Natural killer cell (primary cell): ENCODE measurements at regions of chr14 and their contacts with region 1.

Region 1: DNA sequence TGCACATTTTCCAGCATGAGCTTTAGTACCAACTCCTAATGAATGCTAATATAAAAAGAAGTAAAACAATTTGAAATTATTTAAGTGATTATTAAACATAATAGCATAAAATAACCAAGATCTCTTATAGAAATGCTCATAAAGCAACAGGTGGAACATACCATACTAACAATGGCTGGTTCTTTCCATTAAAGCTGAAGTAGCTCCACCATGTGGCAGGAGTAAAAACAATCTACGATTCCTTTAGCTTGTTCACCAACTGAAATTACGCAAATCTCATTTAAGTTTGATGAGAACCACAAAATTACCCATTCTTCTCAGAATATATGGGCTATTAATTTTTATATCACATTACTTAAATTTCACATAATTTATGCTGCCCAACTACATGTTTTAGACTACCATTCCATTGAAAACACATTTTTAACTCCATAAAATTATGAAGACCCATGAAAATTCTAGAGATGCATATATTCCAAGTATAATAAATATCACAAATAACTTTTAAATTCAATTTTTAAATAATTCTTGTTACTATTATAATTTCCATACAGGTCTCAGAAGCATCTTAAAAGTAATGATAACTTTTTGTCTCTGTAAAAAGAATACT is 213.6 kb downstream of the DAD1 start:
- DNase-seq: peak in 1 of 2 donors; percentile 22
- ATAC-seq: peak in 2 of 3 donors; percentile 62 to 65
- H3K4me3 ChIP-seq: no peak overlapping the region
- H3K4me3 Mint-ChIP-seq: no peak overlapping the region
- H3K27ac ChIP-seq: no peak overlapping the region
- H3K27ac Mint-ChIP-seq: no peak overlapping the region
- H3K4me1 ChIP-seq: no peaks in the 10 kb centered on the region
- H3K4me1 Mint-ChIP-seq: no peaks in the 10 kb centered on the region
- H3K27me3 ChIP-seq: no peaks in the 10 kb centered on the region
- H3K27me3 Mint-ChIP-seq: peaks cover 9 to 19% of the 10 kb centered on the region in 2 donors
- CTCF ChIP-seq: peak; percentile 73

Region 2: GRCh38 chr14:21734457-21735074 is 640.9 kb before region 1 on chr14:
- intact Hi-C with region 1: no loop called
- DNase-seq: peak in 1 of 2 donors; percentile 87
- ATAC-seq: peak in 2 of 3 donors; percentile 59 to 65
- H3K4me3 ChIP-seq: no peak overlapping the region
- H3K4me3 Mint-ChIP-seq: no peak overlapping the region
- H3K27ac ChIP-seq: no peak overlapping the region
- H3K27ac Mint-ChIP-seq: no peak overlapping the region
- H3K4me1 ChIP-seq: no peaks in the 10 kb centered on the region
- H3K4me1 Mint-ChIP-seq: peaks cover 12 to 14% of the 10 kb centered on the region in 2 donors
- H3K27me3 ChIP-seq: peaks cover under 1% of the 10 kb centered on the region
- H3K27me3 Mint-ChIP-seq: peaks cover 22 to 63% of the 10 kb centered on the region in 2 donors
- CTCF ChIP-seq: peak; percentile 77

Region 3: GRCh38 chr14:22163051-22163450 is 212.4 kb before region 1 on chr14:
- intact Hi-C with region 1: loop called (anchors 10 kb)
- DNase-seq: peak in 1 of 2 donors; percentile 40
- ATAC-seq: no peak
- H3K4me3 ChIP-seq: no peak overlapping the region
- H3K4me3 Mint-ChIP-seq: no peak overlapping the region
- H3K27ac ChIP-seq: no peak overlapping the region
- H3K27ac Mint-ChIP-seq: no peak overlapping the region
- H3K4me1 ChIP-seq: no peaks in the 10 kb centered on the region
- H3K4me1 Mint-ChIP-seq: peaks cover 7 to 14% of the 10 kb centered on the region in 2 donors
- H3K27me3 ChIP-seq: peaks cover 2% of the 10 kb centered on the region
- H3K27me3 Mint-ChIP-seq: peaks cover 7 to 31% of the 10 kb centered on the region in 2 donors
- CTCF ChIP-seq: no peak

Region 4: GRCh38 chr14:22226381-22226780 is 149.0 kb before region 1 on chr14:
- intact Hi-C with region 1: loop called (anchors 1 kb)
- DNase-seq: peak in 1 of 2 donors; percentile 60
- ATAC-seq: peak; percentile 48 to 53 (median 49)
- H3K4me3 ChIP-seq: no peak overlapping the region
- H3K4me3 Mint-ChIP-seq: peak overlapping the region; percentile 33
- H3K27ac ChIP-seq: no peak overlapping the region
- H3K27ac Mint-ChIP-seq: peak overlapping the region in 1 of 2 donors; percentile 44
- H3K4me1 ChIP-seq: peaks cover 9% of the 10 kb centered on the region
- H3K4me1 Mint-ChIP-seq: peaks cover 26 to 36% of the 10 kb centered on the region in 2 donors
- H3K27me3 ChIP-seq: no peaks in the 10 kb centered on the region
- H3K27me3 Mint-ChIP-seq: peaks cover 14 to 31% of the 10 kb centered on the region in 2 donors
- CTCF ChIP-seq: no peak

Region 5: DNA sequence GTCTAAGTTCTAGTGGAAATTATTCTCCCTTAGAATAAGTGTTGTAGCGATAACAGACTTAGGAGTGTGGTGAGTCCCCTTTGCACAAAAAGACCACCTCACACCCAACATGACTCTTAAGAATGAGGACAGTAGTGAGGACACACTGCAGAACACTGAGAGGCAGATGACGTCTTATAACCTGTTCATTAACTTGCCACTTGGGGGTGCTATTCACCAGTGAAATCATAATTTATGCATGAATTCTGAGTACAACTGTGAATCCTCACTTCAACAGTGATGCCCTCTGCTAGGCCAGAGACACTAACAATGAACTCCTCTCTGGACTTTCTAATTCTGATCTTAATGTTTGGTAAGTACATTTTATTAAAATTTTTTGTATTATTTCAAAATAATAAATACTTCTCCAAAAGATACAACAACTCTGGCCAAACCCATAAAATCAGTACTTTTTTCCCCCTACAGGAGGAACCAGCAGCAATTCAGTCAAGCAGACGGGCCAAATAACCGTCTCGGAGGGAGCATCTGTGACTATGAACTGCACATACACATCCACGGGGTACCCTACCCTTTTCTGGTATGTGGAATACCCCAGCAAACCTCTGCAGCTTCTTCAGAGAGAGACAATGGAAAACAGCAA is 61.1 kb before region 1 on chr14:
- intact Hi-C with region 1: loop called (anchors 1 kb)
- DNase-seq: peak in 1 of 2 donors; percentile 51
- ATAC-seq: peak; percentile 83 to 98 (median 94)
- H3K4me3 ChIP-seq: no peak overlapping the region
- H3K4me3 Mint-ChIP-seq: no peak overlapping the region
- H3K27ac ChIP-seq: no peak overlapping the region
- H3K27ac Mint-ChIP-seq: no peak overlapping the region
- H3K4me1 ChIP-seq: no peaks in the 10 kb centered on the region
- H3K4me1 Mint-ChIP-seq: no peaks in the 10 kb centered on the region
- H3K27me3 ChIP-seq: no peaks in the 10 kb centered on the region
- H3K27me3 Mint-ChIP-seq: peaks cover 0 to 9% of the 10 kb centered on the region in 2 donors
- CTCF ChIP-seq: peak; percentile 73

Region 6: GRCh38 chr14:22319526-22320361 is 55.7 kb before region 1 on chr14:
- intact Hi-C with region 1: loop called (anchors 1 kb)
- DNase-seq: peak in 1 of 2 donors; percentile 37
- ATAC-seq: peak; percentile 60 to 80 (median 76)
- H3K4me3 ChIP-seq: no peak overlapping the region
- H3K4me3 Mint-ChIP-seq: no peak overlapping the region
- H3K27ac ChIP-seq: no peak overlapping the region
- H3K27ac Mint-ChIP-seq: no peak overlapping the region
- H3K4me1 ChIP-seq: no peaks in the 10 kb centered on the region
- H3K4me1 Mint-ChIP-seq: peaks cover 4 to 5% of the 10 kb centered on the region in 2 donors
- H3K27me3 ChIP-seq: no peaks in the 10 kb centered on the region
- H3K27me3 Mint-ChIP-seq: peaks cover 2 to 6% of the 10 kb centered on the region in 2 donors
- CTCF ChIP-seq: peak; percentile 70